PC-3 (cell line): ENCODE measurements at regions of chr12 and their contacts with region 1.

Region 1: GRCh38 chr12:34625116-34625515 is 602.8 kb downstream of the ALG10 start:
- DNase-seq: peak; percentile 78
- ATAC-seq: peak; percentile 43; the same call in 1 of the 2 replicates
- H3K4me3 ChIP-seq: no peak overlapping the region
- H3K27ac ChIP-seq: no peak overlapping the region
- H3K4me1 ChIP-seq: no peaks in the 10 kb centered on the region
- H3K27me3 ChIP-seq: no peaks in the 10 kb centered on the region
- CTCF ChIP-seq: peak; percentile 77

Region 2: DNA sequence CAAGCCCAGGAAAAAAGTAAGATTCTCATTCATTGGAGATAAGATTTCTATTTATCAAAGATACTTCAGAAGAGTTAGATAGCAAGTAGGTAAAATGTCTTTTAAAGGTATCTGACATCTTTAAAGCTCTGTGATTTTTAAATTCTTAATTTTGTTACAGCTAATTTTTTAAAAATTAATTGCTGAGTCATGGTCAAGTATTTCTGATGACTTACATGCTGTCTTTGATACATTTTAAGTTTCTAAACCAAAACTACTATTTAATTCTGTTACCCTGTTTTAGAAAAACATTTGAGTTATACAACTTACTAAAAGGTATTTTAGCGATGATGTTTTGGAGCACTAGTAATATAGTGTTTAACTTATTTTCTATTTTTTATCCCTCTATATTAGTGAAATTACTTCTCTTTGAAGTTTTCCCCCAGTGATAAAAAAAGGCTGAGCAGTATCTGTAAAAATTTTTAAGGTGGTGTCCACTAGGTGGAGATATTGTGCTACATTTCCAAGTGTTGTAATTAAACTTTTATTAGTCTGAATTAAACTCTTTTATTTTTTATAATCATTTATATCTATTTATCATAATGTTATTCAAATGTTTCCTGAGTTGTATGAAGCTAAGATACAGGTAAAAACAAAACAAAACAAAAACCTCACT is 591.4 kb before region 1 on chr12:
- CTCF ChIA-PET with region 1: no interaction called
- POLR2A ChIA-PET with region 1: no interaction called
- intact Hi-C with region 1: loop called (anchors 1 kb)
- DNase-seq: peak; percentile 59
- ATAC-seq: no peak
- H3K4me3 ChIP-seq: no peak overlapping the region
- H3K27ac ChIP-seq: no peak overlapping the region
- H3K4me1 ChIP-seq: no peaks in the 10 kb centered on the region
- H3K27me3 ChIP-seq: no peaks in the 10 kb centered on the region
- CTCF ChIP-seq: peak; percentile 56

Region 3: DNA sequence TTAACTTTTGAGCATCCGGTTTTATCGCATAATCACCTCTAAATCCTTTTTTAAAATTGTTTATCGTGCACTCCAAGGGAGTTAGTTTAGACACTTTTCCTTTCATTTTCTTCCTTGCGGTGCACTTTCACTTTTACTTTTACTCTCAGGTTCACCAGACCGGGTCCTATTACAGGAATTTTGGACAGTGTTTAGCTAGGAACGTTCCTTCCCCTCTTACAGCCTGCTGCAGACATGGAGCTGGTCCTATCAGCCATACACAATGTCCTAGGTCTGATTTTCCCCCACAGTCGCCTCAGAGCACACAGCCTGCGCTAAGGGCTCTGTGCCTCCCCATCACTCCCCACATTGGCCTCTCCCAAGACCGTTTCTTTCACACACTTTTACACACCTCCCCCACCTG is 498.9 kb before region 1 on chr12:
- CTCF ChIA-PET with region 1: interaction called, 4 read pairs
- POLR2A ChIA-PET with region 1: no interaction called
- intact Hi-C with region 1: loop called (anchors 1 kb)
- DNase-seq: peak; percentile 16
- ATAC-seq: peak; percentile 64
- H3K4me3 ChIP-seq: peak overlapping the region; percentile 51
- H3K27ac ChIP-seq: no peak overlapping the region
- H3K4me1 ChIP-seq: no peaks in the 10 kb centered on the region; the same call in 1 of the 2 replicates
- H3K27me3 ChIP-seq: no peaks in the 10 kb centered on the region
- CTCF ChIP-seq: no peak

Region 4: DNA sequence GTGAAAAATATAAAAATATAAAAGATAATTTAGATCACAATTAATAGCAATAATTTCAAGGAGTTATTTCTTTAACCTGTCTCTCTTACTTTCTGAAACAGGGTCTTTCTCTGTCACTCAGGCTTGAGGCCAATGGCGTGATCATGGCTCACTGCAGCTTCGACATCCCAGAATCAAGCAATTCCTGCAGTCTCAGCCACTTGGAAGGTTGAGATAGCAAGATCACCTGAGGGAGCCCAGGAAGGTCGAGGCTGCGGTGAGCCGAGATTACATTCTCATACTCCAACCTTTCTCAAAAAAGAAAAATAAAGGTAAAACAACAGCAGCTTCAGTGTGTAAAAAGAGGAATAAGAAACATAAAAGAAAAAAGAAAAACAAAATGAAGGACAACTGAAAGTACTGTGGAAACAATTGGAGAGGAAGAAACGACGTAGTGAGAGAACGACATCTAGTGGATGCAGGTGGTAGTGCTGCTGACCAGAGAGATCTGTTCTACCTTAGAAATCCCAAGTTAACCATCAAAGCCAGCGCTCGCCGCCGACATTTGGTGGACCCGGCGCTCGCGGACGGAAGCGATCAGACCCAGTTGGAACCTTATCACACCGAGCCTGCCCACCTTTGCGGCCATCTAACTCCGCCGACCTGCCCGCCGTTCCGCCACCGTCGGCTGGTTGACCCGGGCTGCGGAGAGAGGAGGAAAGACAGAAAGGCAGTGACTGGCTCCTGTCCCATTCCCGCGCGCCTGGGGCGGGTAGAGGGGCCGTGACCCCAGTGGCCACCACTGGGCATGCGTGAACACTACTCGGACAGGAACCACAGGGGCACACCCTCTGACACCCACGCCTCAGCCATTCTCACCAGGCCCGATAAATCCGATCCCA is 406.7 kb before region 1 on chr12:
- CTCF ChIA-PET with region 1: no interaction called
- POLR2A ChIA-PET with region 1: no interaction called
- intact Hi-C with region 1: loop called (anchors 1 kb)
- DNase-seq: peak; percentile 89
- ATAC-seq: peak; percentile 89
- H3K4me3 ChIP-seq: peak overlapping the region; percentile 87
- H3K27ac ChIP-seq: no peak overlapping the region
- H3K4me1 ChIP-seq: no peaks in the 10 kb centered on the region; the same call in 1 of the 2 replicates
- H3K27me3 ChIP-seq: no peaks in the 10 kb centered on the region
- CTCF ChIP-seq: peak; percentile 92

Region 5: DNA sequence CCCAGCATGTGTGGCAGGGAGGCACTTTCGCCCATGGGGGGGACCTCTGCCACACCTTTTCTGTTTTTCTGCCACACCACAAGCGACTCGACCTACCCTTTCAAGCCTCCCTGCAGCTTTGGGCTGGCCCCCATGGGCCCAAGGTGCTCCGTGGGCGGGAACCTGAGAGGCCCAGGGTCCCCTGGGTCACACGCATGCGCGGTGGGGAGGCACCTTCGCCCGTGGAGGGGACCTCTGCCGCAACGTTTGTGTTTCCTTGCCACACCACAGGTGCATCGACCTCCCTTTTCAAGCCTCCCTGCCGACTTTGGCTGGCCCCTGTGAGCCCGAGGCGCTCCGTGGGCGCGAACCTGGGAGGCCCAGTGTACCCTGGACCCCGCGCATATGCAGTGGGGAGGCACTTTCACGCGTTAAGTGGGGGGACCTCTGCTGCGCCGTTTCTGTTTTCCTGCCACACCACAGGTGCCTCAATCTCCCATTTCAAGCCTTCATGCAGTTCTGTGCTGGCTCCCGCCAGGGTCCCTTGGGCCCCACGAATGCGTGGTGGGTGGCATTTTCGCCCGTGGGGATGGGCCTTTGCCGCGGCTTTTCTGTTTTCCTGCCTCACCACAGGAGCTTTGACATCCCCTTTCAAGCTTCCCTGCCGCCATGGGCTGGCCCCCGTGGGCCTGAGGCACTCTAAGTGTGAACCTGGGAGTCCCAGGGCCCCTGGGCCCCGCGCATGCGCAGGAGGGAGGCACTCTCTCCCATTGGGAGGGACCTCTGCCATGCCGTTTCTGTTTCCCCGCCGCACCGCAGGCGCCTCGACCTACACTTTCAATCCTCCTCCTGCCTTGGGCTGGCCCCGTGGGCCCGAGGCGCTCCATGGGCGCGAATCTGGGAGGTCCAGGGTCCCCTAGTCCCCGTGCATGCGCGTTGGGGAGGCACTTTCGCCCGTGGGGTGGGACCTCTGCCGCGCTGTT is 270.6 kb before region 1 on chr12:
- CTCF ChIA-PET with region 1: no interaction called
- POLR2A ChIA-PET with region 1: no interaction called
- intact Hi-C with region 1: loop called (anchors 10 kb)
- DNase-seq: no peak
- ATAC-seq: no peak
- H3K4me3 ChIP-seq: no peak overlapping the region; the same call in 1 of the 2 replicates
- H3K27ac ChIP-seq: no peak overlapping the region
- H3K4me1 ChIP-seq: 0 out of 2 replicates have a peak, but pooled peaks cover 8% of the 10 kb centered on the region
- H3K27me3 ChIP-seq: peaks cover 29% of the 10 kb centered on the region
- CTCF ChIP-seq: no peak

Region 6: DNA sequence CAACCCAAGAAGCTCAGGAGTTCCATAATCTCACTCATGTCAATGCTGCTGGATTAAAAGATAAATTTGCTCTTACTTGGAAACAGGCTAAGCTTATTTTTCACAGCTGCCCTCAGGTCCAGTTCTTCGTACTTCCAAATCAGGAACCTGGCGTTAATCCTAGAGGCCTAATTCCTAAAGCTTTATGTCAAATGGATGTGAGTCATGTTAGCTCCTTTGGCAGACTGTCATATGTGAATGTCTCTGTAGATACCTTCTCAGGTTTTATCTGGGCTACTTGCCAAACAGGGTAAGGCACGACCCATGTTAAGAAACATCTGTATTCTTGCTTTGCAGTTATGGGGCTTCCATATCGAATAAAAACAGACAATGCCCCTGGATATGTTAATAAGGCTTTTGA is 98.2 kb before region 1 on chr12:
- CTCF ChIA-PET with region 1: no interaction called
- POLR2A ChIA-PET with region 1: no interaction called
- intact Hi-C with region 1: no loop called
- DNase-seq: peak; percentile 91
- ATAC-seq: peak; percentile 64
- H3K4me3 ChIP-seq: no peak overlapping the region
- H3K27ac ChIP-seq: peak overlapping the region; percentile 23
- H3K4me1 ChIP-seq: 0 out of 2 replicates have a peak, but pooled peaks cover 3% of the 10 kb centered on the region
- H3K27me3 ChIP-seq: no peaks in the 10 kb centered on the region
- CTCF ChIP-seq: no peak